HepG2 (cell line): ENCODE measurements at regions of chr9 and their contacts with region 1.

Region 1: DNA sequence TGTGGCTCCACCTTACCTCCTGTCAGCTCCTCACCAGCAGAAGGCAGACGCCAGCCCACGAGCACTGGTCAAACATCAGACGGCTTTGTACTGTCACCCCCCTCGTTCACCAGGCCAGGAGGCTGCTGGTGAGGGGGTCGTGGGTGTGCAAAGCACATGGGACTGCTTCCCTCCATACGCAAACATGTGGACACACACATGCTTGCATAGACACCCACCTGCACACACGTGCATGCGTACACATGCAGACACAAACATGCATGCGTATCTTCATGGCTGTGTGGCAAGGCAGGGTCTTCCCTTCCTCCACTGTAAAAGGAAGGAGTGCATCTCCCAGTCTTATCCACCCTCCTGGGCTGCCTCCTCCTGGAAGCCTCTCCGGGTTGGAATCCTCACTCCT is 178.5 kb downstream of the OLFM1 start:
- DNase-seq: no peak
- ATAC-seq: no peak
- H3K4me3 ChIP-seq: no peak overlapping the region
- H3K27ac ChIP-seq: no peak overlapping the region
- H3K4me1 ChIP-seq: peaks cover 15% of the 10 kb centered on the region
- H3K27me3 ChIP-seq: peaks cover 4 to 82% of the 10 kb centered on the region in 2 experiments; a peak in 4 of 5 replicates
- CTCF ChIP-seq: no peak
- EP300 ChIP-seq: no peak
- POLR2A ChIP-seq: no peak
- RAD21 ChIP-seq: no peak

Region 2: DNA sequence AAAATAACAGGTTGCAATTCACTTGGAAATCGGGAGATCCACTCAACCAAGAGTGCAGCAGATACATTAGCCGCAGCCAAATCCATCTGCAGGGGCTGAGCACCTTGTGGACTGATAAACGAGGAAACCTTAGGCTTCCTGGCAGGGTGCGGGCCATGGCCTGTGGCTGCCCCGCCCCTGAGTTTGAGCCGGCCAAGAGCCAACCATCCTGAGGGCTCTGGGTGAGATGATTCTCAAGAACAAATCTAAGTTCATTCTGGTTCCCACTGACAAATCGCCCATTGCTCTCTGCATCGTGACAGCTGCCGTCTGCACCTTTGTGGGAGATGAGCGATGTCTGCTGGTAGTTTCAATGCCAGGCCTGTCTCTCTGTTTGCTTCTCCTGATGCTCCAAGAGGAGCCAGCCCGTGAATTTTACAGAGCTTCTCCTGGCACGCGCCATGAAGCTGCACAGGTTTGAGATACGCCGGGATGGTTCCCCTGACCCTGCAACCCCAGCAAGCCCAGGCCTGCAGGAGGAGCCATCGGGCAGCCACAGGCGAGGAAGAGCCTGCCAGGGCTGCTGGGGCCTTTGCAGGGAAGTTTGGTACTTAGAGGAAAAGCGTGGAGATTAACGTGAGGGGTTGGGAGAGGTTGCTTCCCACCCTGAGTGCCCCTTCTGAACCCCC is 24.4 kb before region 1 on chr9:
- CTCF ChIA-PET with region 1: no interaction called
- POLR2A ChIA-PET with region 1: no interaction called
- in situ Hi-C with region 1: no loop called
- intact Hi-C with region 1: loop called (anchors 2 kb)
- DNase-seq: no peak
- ATAC-seq: peak; percentile 73
- H3K4me3 ChIP-seq: no peak overlapping the region
- H3K27ac ChIP-seq: no peak overlapping the region
- H3K4me1 ChIP-seq: no peaks in the 10 kb centered on the region
- H3K27me3 ChIP-seq: peaks cover 8 to 60% of the 10 kb centered on the region in 2 experiments; a peak in 4 of 5 replicates
- CTCF ChIP-seq: peak; percentile 46
- EP300 ChIP-seq: no peak
- POLR2A ChIP-seq: no peak
- RAD21 ChIP-seq: no peak